Natural killer cell (primary cell): ENCODE measurements at regions of chr13 and their contacts with region 1.

Region 1: DNA sequence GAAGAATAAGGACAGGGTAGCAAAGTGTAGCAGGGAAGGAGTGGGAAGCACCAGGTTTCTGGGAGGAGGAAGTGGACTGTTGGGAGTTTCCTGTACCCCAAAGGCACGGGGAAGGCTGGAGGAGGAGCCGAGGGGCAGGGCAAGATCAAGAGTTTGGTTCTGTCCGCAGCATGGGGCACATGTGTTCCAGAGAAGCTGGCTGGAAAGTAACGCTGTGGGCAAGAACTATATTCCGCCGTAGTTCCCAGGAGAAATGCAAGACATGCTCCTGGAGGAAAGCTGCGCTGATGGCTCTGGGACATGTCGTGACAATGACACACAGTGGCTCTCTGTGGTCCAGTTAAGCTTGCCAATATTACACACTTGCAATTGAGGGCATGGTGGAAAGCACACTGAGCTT is 51.7 kb upstream of the KPNA3 start:
- DNase-seq: no peak
- ATAC-seq: no peak
- H3K4me3 ChIP-seq: no peak overlapping the region
- H3K4me3 Mint-ChIP-seq: no peak overlapping the region
- H3K27ac ChIP-seq: no peak overlapping the region
- H3K27ac Mint-ChIP-seq: no peak overlapping the region
- H3K4me1 ChIP-seq: peaks cover 8% of the 10 kb centered on the region
- H3K4me1 Mint-ChIP-seq: peaks cover 8 to 9% of the 10 kb centered on the region in 2 donors
- H3K27me3 ChIP-seq: peaks cover 4% of the 10 kb centered on the region
- H3K27me3 Mint-ChIP-seq: peaks cover 2 to 7% of the 10 kb centered on the region in 2 donors
- CTCF ChIP-seq: no peak

Region 2: DNA sequence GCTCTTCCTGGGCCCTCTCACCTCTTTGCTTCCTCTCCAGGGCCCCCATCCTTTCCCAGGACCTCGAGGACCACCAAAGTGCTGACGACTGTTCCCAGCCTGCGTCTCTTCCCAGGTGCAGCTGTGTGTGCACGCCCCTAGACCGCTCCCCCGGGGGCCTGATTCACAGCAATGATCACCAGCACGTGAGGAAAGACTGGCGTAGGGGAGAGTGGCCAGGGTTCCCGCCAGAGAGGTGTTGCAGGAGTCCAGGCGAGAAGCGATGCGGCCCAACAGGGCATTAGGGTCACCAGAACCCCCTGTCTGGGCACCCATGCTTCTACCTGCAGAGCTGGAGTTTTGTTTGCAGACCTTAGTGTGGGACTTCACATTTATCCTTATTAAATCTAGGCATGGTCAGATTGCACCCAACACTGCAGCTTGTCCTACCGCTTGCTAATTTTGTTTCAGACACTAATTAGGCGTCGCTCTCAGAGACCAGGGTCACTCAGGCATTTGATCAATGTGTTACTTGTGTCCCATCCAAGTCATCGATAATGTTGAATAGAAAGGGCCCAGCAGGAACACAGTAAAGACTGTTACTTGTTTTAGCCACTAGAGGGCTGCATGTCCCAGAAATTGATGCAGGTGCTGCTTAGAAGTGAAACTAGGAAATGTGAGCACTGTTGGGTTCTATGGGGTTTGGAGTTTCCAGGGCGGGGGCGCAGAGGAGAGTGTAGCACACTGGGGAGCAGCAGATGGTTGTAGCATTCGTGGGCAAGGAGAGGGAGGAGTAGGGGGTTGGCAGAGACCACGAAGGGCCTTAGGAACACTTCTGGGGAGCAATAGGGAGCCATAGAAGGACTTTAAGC is 543.2 kb before region 1 on chr13:
- intact Hi-C with region 1: loop called (anchors 1 kb)
- DNase-seq: peak; percentile 47 to 85
- ATAC-seq: peak; percentile 92 to 100 (median 99)
- H3K4me3 ChIP-seq: peak overlapping the region; percentile 28
- H3K4me3 Mint-ChIP-seq: peak overlapping the region; percentile 81
- H3K27ac ChIP-seq: no peak overlapping the region
- H3K27ac Mint-ChIP-seq: peak overlapping the region in 1 of 2 donors; percentile 82
- H3K4me1 ChIP-seq: peaks cover 6% of the 10 kb centered on the region
- H3K4me1 Mint-ChIP-seq: peaks cover 13 to 18% of the 10 kb centered on the region in 2 donors
- H3K27me3 ChIP-seq: no peaks in the 10 kb centered on the region
- H3K27me3 Mint-ChIP-seq: no peaks in the 10 kb centered on the region
- CTCF ChIP-seq: peak; percentile 82

Region 3: GRCh38 chr13:49669735-49670309 is 174.4 kb before region 1 on chr13:
- intact Hi-C with region 1: loop called (anchors 1 kb)
- DNase-seq: peak in 1 of 2 donors; percentile 57
- ATAC-seq: peak; percentile 64 to 82 (median 68)
- H3K4me3 ChIP-seq: no peak overlapping the region
- H3K4me3 Mint-ChIP-seq: no peak overlapping the region
- H3K27ac ChIP-seq: no peak overlapping the region
- H3K27ac Mint-ChIP-seq: no peak overlapping the region
- H3K4me1 ChIP-seq: peaks cover 4% of the 10 kb centered on the region
- H3K4me1 Mint-ChIP-seq: peaks cover 6% of the 10 kb centered on the region in 2 donors
- H3K27me3 ChIP-seq: no peaks in the 10 kb centered on the region
- H3K27me3 Mint-ChIP-seq: no peaks in the 10 kb centered on the region
- CTCF ChIP-seq: peak; percentile 20

Region 4: DNA sequence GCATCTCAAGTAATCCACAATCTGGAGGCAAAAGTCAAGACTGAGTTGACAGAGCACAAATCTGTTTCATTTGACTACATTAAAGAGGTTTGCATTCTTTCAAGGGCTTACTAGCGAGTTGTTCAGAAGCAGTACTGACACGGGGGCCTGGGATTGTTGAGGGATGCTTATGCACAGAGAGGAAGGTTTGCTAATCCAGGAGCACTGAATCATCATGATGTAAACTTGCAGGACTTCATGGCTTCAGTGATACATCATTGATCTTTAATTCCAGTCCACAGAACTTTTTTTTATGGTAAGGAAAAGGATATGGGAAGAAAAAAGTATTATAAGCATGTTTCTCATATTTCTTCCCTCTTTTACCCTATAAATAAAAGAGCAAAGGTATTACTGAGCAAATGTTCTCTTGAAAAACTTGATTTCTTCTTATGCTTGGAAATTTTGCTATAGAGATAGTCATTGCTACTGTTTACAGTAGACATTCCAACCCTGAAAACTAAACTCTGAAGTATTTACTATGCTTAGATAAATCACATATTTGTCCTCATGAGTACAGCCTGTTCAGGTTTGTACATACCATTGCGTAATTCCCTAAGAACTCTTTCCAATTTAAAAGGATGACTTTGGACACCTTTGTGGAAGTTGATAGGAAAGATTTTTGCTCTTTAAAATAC is 14.1 kb after region 1 on chr13:
- intact Hi-C with region 1: no loop called
- DNase-seq: no peak
- ATAC-seq: no peak
- H3K4me3 ChIP-seq: no peak overlapping the region
- H3K4me3 Mint-ChIP-seq: no peak overlapping the region
- H3K27ac ChIP-seq: no peak overlapping the region
- H3K27ac Mint-ChIP-seq: no peak overlapping the region
- H3K4me1 ChIP-seq: no peaks in the 10 kb centered on the region
- H3K4me1 Mint-ChIP-seq: no peaks in the 10 kb centered on the region
- H3K27me3 ChIP-seq: no peaks in the 10 kb centered on the region
- H3K27me3 Mint-ChIP-seq: peaks cover 7 to 20% of the 10 kb centered on the region in 2 donors
- CTCF ChIP-seq: no peak